ENCODE measurements at regions of chr10 and their contacts with region 1.

Region 1: GRCh38 chr10:6163364-6164270 is 39.1 kb upstream of the PFKFB3 start:
- DNase-seq: peak; percentile 85
- H3K4me3 Mint-ChIP-seq: peak overlapping the region; percentile 95
- H3K27ac Mint-ChIP-seq: peak overlapping the region; percentile 93
- H3K4me1 Mint-ChIP-seq: peaks cover 18% of the 10 kb centered on the region
- H3K27me3 Mint-ChIP-seq: no peaks in the 10 kb centered on the region
- CTCF ChIP-seq: no peak

Region 2: DNA sequence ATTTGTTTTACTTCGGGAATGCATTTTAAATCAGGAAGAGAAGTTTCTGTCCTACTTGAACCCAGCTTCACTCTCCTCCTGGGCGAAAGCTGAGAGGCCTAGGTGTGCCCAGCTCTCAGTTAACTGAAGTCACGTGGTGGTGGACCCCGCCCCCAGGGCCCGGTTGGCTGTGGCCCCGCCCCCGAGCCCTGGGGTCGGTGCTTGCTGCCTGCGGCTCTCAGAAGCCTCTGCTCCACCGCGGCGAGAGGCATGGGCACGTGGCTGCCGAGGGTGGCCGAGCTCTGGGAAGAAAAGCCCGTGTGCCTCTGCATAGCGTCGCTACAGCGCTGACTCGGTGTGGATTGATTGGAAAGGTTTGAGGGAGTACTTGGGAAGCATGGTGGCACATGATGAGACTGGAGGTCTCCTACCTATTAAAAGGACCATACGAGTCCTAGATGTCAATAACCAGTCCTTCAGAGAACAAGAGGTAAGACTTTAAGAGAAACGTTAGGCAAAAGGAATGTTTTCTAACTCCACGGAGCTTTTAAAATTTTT is 717.2 kb before region 1 on chr10:
- CTCF ChIA-PET with region 1: no interaction called
- POLR2A ChIA-PET with region 1: no interaction called
- intact Hi-C with region 1: no loop called
- DNase-seq: peak; percentile 79
- H3K4me3 Mint-ChIP-seq: peak overlapping the region; percentile 81
- H3K27ac Mint-ChIP-seq: peak overlapping the region; percentile 89
- H3K4me1 Mint-ChIP-seq: peaks cover 24% of the 10 kb centered on the region
- H3K27me3 Mint-ChIP-seq: no peaks in the 10 kb centered on the region
- CTCF ChIP-seq: no peak

Region 3: GRCh38 chr10:6088721-6089390 is 74.8 kb before region 1 on chr10 and contains the start of gene RBM17:
- CTCF ChIA-PET with region 1: no interaction called
- POLR2A ChIA-PET with region 1: interaction called, 11 read pairs
- intact Hi-C with region 1: no loop called
- DNase-seq: peak; percentile 94
- H3K4me3 Mint-ChIP-seq: peak within 1 kb of the TSS; percentile 79
- H3K27ac Mint-ChIP-seq: peak within 1 kb of the TSS; percentile 52
- H3K4me1 Mint-ChIP-seq: peaks cover 32% of the 10 kb centered on the region
- H3K27me3 Mint-ChIP-seq: peaks cover 28% of the 10 kb centered on the region
- CTCF ChIP-seq: peak; percentile 100
- total RNA-seq, gene RBM17: 113 and 128 TPM in 2 replicates

Region 4: GRCh38 chr10:6144406-6145165 is 19.0 kb before region 1 on chr10:
- CTCF ChIA-PET with region 1: interaction called, 3 read pairs
- POLR2A ChIA-PET with region 1: interaction called, 14 read pairs
- intact Hi-C with region 1: no loop called
- DNase-seq: peak; percentile 82
- H3K4me3 Mint-ChIP-seq: peak overlapping the region; percentile 78
- H3K27ac Mint-ChIP-seq: no peak overlapping the region
- H3K4me1 Mint-ChIP-seq: peaks cover 19% of the 10 kb centered on the region
- H3K27me3 Mint-ChIP-seq: no peaks in the 10 kb centered on the region
- CTCF ChIP-seq: no peak

Region 5: DNA sequence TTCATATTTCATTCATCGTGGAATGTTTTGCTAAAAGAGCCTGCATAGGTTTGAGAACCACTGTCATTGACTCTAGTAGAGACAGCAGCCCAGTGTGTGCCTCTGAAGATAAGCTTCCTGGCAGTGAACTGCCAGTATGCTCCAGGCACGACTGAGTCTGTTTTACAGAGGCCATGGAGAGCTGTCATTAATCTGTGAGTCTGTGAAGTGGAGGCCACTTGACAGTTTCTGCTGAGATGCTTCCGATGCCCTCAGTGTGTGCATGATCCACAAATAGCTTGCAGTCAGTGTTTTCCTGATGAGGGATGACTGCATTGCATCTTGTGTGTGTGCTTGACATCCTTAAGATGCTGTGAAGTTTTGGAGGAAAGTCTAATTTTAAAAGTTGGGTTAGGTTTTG is 201.3 kb after region 1 on chr10:
- CTCF ChIA-PET with region 1: no interaction called
- POLR2A ChIA-PET with region 1: no interaction called
- intact Hi-C with region 1: no loop called
- DNase-seq: no peak
- H3K4me3 Mint-ChIP-seq: no peak overlapping the region
- H3K27ac Mint-ChIP-seq: no peak overlapping the region
- H3K4me1 Mint-ChIP-seq: peaks cover 5% of the 10 kb centered on the region
- H3K27me3 Mint-ChIP-seq: no peaks in the 10 kb centered on the region
- CTCF ChIP-seq: no peak

Region 6: GRCh38 chr10:6396652-6397051 is 233.0 kb after region 1 on chr10:
- CTCF ChIA-PET with region 1: interaction called, 6 read pairs
- POLR2A ChIA-PET with region 1: interaction called, 4 read pairs
- intact Hi-C with region 1: loop called (anchors 1 kb)
- DNase-seq: peak; percentile 92
- H3K4me3 Mint-ChIP-seq: no peak overlapping the region
- H3K27ac Mint-ChIP-seq: peak overlapping the region; percentile 1
- H3K4me1 Mint-ChIP-seq: peaks cover 26% of the 10 kb centered on the region
- H3K27me3 Mint-ChIP-seq: no peaks in the 10 kb centered on the region
- CTCF ChIP-seq: no peak